ENCODE measurements at regions of chr22 and their contacts with region 1.

Region 1: DNA sequence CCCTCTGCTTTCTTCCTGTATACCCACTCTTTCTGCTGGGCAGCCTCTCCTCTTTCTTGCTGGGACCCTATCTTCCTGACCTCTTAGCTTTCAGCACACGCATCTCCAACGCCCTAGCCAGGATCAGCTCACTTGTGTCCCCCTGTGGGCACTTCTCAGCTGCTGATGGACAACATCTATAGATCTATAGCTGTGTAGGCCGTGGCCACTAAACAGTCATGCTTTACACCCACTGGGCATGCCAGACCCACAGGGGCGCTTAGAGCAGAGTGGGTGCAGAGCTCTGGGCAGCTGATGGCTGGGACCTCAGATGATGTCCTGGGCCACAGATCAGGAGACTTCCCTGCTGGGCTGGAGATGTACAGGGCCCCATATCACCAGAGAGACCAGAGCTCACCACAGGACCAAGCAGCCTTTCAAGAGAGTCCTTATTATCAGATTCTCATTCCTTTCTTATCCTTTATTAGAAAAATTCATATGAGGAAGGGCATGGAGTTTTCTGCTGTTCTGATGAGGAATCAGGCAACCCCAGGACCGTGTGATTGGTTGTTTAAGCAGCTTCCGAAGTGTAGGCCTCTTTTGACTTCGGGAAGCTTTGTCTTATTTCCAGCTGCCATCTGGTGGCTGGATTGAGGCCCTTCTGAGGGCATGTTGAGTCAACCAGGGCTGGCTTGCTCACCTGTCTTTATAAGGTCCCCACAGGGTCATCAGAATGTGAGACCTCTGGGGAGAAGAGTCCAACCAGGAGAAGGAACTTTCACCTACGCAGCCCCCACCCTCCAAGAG is 60.5 kb downstream of the OSBP2 start:
- DNase-seq: peak; percentile 73
- H3K4me3 Mint-ChIP-seq: no peak overlapping the region
- H3K27ac Mint-ChIP-seq: no peak overlapping the region
- H3K4me1 Mint-ChIP-seq: no peaks in the 10 kb centered on the region
- H3K27me3 Mint-ChIP-seq: no peaks in the 10 kb centered on the region

Region 2: GRCh38 chr22:30606455-30607299 is 148.5 kb before region 1 on chr22 and contains the start of gene TCN2:
- CTCF ChIA-PET with region 1: interaction called, 13 read pairs
- DNase-seq: peak; percentile 61
- H3K4me3 Mint-ChIP-seq: peak within 1 kb of the TSS; percentile 65
- H3K27ac Mint-ChIP-seq: no peak within 1 kb of the TSS
- H3K4me1 Mint-ChIP-seq: peaks cover 47% of the 10 kb centered on the region
- H3K27me3 Mint-ChIP-seq: peaks cover 40% of the 10 kb centered on the region

Region 3: DNA sequence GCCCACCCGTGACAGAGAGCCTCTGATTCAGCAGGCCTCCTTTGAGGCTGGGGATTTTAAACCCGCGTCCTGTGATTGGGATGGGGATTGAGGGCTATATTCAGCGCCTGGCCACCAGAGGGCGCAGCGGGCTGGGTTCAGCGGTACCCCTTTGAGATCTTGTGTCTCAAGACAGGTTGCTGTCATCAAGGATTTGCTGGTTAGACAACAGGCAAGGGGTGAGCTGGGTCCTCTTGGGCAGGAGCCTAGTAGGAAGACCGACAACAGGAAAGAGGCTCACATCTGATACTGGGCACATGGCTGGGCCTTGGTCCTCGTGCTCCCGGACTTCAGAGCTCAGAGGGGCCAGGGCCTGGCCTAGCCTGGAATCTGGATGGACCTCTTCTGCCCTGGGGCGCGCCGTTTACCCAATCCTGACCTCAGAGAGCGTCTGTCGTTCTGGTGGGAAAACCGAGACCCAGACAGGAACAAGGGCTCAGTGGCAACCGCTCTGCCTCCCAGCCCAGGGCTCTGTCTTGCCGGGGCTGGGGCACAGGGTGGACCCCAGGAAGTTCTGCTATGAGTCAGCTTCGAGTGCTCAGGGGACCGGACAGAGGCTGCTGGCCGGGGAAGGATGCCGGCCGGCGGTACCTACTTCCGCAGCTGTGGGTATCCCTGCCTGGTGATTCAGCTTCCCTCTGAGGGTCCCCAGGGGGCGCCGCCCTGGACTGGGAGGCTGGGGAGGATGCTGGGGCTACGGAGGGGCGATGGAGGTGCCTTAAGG is 120.5 kb before region 1 on chr22:
- CTCF ChIA-PET with region 1: interaction called, 190 read pairs
- DNase-seq: peak; percentile 93
- H3K4me3 Mint-ChIP-seq: peak overlapping the region; percentile 70
- H3K27ac Mint-ChIP-seq: peak overlapping the region; percentile 92
- H3K4me1 Mint-ChIP-seq: peaks cover 27% of the 10 kb centered on the region
- H3K27me3 Mint-ChIP-seq: no peaks in the 10 kb centered on the region

Region 4: DNA sequence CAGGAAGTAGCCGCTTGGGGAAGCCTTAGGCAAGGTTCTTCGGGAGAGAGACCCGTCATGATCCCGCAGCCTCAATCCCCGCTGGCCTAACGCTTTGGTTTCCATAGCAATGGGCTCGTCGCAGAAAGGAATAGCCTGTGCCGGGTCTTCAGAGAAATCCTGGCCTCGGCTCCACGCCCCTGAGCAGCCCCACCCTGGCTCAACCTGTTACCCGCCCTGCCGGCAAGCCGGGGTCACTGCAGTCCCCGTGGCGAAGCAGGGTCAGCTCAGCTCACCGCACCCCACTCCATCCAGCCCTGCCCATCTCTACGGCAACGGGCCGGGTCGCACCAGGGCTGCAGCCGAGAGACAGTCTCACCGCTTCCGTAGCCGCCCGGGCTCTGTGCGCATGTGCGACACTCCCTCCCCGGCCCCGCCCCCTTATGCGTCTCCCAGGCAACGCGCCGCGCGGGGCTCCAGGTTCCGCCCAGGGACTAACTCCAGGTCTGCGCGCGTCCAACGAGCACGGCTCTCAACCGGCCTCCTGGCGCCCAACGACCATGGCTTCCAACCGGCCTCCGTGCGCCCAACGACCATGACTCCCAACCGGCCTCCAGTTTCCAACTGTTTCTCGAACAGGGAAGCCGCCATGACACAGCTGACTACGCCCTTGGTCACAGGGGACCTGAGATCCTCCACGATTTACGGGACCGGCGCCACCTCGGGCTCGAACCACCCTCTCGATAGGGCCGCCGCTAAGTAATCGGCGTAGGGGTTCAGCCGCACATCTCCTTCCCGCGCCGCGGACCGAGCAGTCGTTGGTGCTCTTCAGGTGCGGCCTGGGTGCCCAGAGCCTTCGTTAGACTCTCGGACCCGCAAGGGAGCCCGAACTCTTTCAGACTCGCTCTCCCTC is 87.4 kb before region 1 on chr22 and contains the start of gene DUSP18:
- CTCF ChIA-PET with region 1: interaction called, 12 read pairs
- DNase-seq: peak; percentile 95
- H3K4me3 Mint-ChIP-seq: peak within 1 kb of the TSS; percentile 97
- H3K27ac Mint-ChIP-seq: peak within 1 kb of the TSS; percentile 84
- H3K4me1 Mint-ChIP-seq: peaks cover 16% of the 10 kb centered on the region
- H3K27me3 Mint-ChIP-seq: peaks cover 23% of the 10 kb centered on the region

Region 5: DNA sequence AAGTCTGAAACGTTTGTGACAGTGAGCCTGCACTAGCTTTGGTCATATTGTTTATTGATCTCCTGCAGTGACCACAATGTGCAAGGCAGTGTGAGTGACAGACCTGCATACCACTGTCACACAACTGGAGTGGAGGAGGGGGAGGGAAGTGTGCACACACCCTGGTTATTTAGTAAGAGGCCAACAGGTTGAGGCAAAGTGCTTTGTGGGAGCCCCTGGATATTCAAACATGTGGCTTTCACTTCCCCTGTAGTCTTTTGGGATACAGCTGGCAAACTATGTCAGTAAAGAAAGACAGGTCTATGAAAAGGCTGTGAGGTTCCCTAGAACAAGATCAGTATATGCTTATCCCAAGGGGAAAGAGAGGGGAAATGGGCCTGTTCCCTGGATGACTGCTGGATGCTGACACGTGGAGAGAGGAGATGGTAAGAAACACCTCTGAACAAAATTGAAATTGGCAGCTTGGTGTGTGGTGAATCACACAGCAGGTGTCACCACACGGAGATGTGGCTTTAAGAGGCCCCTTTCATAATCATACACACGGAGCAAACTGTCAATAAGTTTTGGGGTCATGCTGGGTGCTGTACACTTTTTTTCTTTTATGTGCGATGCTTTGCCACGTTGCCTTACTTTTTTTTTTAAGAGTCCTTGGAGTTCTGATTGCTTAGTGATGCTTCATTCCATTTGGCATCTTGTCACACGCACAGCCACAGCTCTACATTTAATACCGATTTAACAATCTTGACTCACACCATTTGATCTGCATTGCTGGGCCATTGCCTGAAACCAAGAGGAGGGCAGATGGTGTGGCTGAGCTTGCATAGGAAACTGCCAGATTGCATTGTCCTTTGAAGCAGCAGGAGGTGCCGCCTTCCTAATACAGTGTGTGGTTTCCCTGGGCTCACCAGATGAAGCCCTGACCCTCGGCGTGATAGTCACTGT is 49.2 kb before region 1 on chr22:
- CTCF ChIA-PET with region 1: interaction called, 33 read pairs
- DNase-seq: no peak
- H3K4me3 Mint-ChIP-seq: no peak overlapping the region
- H3K27ac Mint-ChIP-seq: no peak overlapping the region
- H3K4me1 Mint-ChIP-seq: peaks cover 26% of the 10 kb centered on the region
- H3K27me3 Mint-ChIP-seq: no peaks in the 10 kb centered on the region

Region 6: GRCh38 chr22:30920407-30920806 is 165.2 kb after region 1 on chr22:
- CTCF ChIA-PET with region 1: interaction called, 10 read pairs
- DNase-seq: peak; percentile 89
- H3K4me3 Mint-ChIP-seq: peak overlapping the region; percentile 33
- H3K27ac Mint-ChIP-seq: no peak overlapping the region
- H3K4me1 Mint-ChIP-seq: peaks cover 18% of the 10 kb centered on the region
- H3K27me3 Mint-ChIP-seq: no peaks in the 10 kb centered on the region